CD8-positive, alpha-beta memory T cell (primary cell): ENCODE measurements at regions of chr2 and their contacts with region 1.

Region 1: GRCh38 chr2:71347517-71347916 is 15.9 kb downstream of the ZNF638 start:
- DNase-seq: no peak
- H3K4me3 ChIP-seq: no peak overlapping the region
- H3K4me3 Mint-ChIP-seq: no peak overlapping the region
- H3K27ac ChIP-seq: no peak overlapping the region
- H3K27ac Mint-ChIP-seq: no peak overlapping the region
- H3K4me1 ChIP-seq: peaks cover 8% of the 10 kb centered on the region
- H3K4me1 Mint-ChIP-seq: peaks cover 60 to 86% (median 82%) of the 10 kb centered on the region in 3 donors
- H3K27me3 ChIP-seq: no peaks in the 10 kb centered on the region
- H3K27me3 Mint-ChIP-seq: no peaks in the 10 kb centered on the region

Region 2: DNA sequence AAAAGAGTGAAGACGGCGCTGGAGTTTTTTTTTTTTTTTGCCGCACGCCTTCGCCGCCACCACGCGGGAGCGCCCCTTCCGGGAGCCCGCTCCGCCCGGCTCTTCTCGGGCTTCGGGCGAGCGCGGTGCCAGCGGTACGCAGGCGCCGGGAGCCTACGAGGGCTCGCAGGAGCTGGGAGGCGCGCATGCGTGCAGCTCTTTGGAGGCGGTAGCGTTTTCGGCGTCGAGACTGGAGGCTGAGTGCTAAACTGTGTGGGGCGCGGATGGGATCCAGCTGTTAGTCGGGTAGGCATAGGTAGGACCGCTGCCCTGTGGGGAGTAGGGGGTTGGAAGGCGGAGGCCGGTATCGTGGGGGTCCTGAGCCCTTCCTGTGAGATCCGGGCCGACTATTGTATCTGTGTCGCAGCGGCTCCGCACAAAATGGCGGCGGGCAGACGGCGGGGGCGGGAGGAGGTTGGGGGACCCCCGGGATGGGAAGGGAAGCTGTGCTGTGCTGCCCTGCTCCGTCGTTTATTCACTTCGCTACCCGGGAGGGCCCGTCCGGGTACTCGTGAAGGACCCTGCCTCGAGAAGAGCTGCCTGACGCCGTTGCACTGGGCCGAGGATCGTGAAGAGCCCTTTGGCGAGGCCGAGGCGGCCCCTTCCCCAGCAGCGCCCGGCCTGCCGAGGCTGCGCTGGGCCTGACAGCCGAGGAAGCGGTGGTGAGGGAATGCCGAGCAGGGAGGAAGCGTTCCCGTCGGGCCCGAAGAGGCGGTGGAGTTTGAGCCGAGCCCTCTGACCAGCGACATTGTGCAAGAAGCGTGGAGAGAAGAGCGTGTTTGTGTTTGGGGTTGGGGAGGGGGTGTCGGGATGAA is 15.7 kb before region 1 on chr2 and contains the start of gene ZNF638:
- CTCF ChIA-PET with region 1: interaction called, 33 read pairs
- POLR2A ChIA-PET with region 1: interaction called, 4 read pairs
- DNase-seq: peak; percentile 89 to 94 (median 92)
- H3K4me3 ChIP-seq: peak within 1 kb of the TSS; percentile 88
- H3K4me3 Mint-ChIP-seq: peak within 1 kb of the TSS; percentile 95 to 100 (median 100)
- H3K27ac ChIP-seq: peak within 1 kb of the TSS; percentile 91
- H3K27ac Mint-ChIP-seq: peak within 1 kb of the TSS; percentile 87 to 100 (median 100)
- H3K4me1 ChIP-seq: peaks cover 42% of the 10 kb centered on the region
- H3K4me1 Mint-ChIP-seq: peaks cover 44 to 55% (median 53%) of the 10 kb centered on the region in 3 donors
- H3K27me3 ChIP-seq: no peaks in the 10 kb centered on the region
- H3K27me3 Mint-ChIP-seq: peaks cover 2 to 13% of the 10 kb centered on the region in 2 donors
- total RNA-seq, gene ZNF638: 77.9 to 83.4 TPM